Naive thymus-derived CD8-positive, alpha-beta T cell (primary cell): ENCODE measurements at regions of chr12 and their contacts with region 1.

Region 1: GRCh38 chr12:89524541-89525285 is at the start of gene GALNT4:
- DNase-seq: peak; percentile 52 to 82 (median 70)
- ATAC-seq: peak; percentile 70 to 76
- H3K4me3 Mint-ChIP-seq: peak within 1 kb of the TSS; percentile 83 to 99 (median 95)
- H3K27ac Mint-ChIP-seq: peak within 1 kb of the TSS; percentile 82 to 96 (median 94)
- H3K4me1 Mint-ChIP-seq: peaks cover 26 to 72% (median 59%) of the 10 kb centered on the region in 4 donors
- H3K27me3 Mint-ChIP-seq: no peaks in the 10 kb centered on the region
- polyA plus RNA-seq, gene GALNT4: 2.0 to 2.6 (median 2.4) TPM

Region 2: GRCh38 chr12:89470741-89471509 is 53.8 kb before region 1 on chr12:
- POLR2A ChIA-PET with region 1: interaction called, 14 read pairs
- DNase-seq: peak in 3 of 10 donors; percentile 45 to 57 (median 54)
- ATAC-seq: peak; percentile 80 to 82
- H3K4me3 Mint-ChIP-seq: no peak overlapping the region
- H3K27ac Mint-ChIP-seq: peak overlapping the region in 7 of 10 donors; percentile 32 to 82 (median 61)
- H3K4me1 Mint-ChIP-seq: peaks cover 19 to 68% (median 39%) of the 10 kb centered on the region in 4 donors
- H3K27me3 Mint-ChIP-seq: no peaks in the 10 kb centered on the region